ENCODE measurements at regions of chr2 and their contacts with region 1.

Region 1: GRCh38 chr2:105037572-105038382 is at the start of gene MRPS9:
- DNase-seq: peak; percentile 99
- H3K4me3 Mint-ChIP-seq: peak within 1 kb of the TSS; percentile 94
- H3K27ac Mint-ChIP-seq: peak within 1 kb of the TSS; percentile 82
- H3K4me1 Mint-ChIP-seq: peaks cover 33% of the 10 kb centered on the region
- H3K27me3 Mint-ChIP-seq: no peaks in the 10 kb centered on the region
- total RNA-seq, gene MRPS9: 38.2 to 39.3 TPM

Region 2: GRCh38 chr2:105055613-105056012 is 17.8 kb after region 1 on chr2:
- CTCF ChIA-PET with region 1: no interaction called
- POLR2A ChIA-PET with region 1: no interaction called
- intact Hi-C with region 1: loop called (anchors 2 kb)
- DNase-seq: no peak
- H3K4me3 Mint-ChIP-seq: no peak overlapping the region
- H3K27ac Mint-ChIP-seq: no peak overlapping the region
- H3K4me1 Mint-ChIP-seq: peaks cover 13% of the 10 kb centered on the region
- H3K27me3 Mint-ChIP-seq: no peaks in the 10 kb centered on the region

Region 3: GRCh38 chr2:105072039-105072438 is 34.3 kb after region 1 on chr2:
- CTCF ChIA-PET with region 1: no interaction called
- POLR2A ChIA-PET with region 1: no interaction called
- intact Hi-C with region 1: loop called (anchors 5 kb)
- DNase-seq: peak; percentile 52
- H3K4me3 Mint-ChIP-seq: no peak overlapping the region
- H3K27ac Mint-ChIP-seq: no peak overlapping the region
- H3K4me1 Mint-ChIP-seq: peaks cover 20% of the 10 kb centered on the region
- H3K27me3 Mint-ChIP-seq: no peaks in the 10 kb centered on the region

Region 4: DNA sequence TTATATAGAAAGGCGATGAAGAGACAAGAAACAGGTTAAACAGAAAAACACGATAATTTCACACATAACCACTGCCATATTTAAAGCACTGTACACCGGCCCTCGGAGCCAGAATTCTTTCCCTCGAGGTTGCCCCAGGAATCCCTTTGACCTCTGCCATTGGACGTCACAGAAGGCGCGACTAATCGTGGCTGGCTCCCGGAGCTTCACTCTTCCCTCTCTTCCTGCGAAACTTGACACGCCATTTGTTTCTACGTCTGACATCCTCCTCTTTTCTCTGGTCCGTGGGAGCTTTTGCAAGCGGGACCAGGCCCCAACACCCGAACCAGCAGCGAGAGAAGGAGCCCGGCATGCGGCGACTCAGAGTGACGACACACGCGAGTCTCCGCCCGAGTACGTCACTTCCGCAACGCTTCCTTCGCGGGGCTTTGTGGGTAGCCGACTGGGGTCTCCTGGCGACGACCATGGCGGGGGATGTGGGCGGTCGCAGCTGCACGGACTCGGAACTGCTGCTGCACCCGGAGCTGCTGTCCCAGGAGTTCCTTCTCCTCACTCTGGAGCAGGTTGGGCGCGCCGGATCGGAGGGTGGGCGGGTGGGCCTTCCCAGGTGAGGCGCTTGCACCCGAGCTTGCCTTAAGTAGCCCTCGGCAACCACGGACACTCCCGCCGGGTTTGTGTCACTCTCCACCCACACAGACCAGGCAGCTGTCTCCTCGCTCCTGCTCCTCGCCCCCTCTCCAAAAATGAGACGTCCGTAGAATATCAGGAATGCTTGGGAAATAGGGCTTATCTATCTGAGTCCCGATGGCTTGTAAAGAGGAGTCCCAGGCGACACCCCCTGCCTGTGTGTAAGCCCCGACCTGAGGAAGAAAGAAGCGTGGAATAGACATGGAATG is 299.6 kb after region 1 on chr2 and contains the start of gene C2orf49:
- CTCF ChIA-PET with region 1: no interaction called
- POLR2A ChIA-PET with region 1: no interaction called
- intact Hi-C with region 1: loop called (anchors 10 kb)
- DNase-seq: peak; percentile 93
- H3K4me3 Mint-ChIP-seq: peak within 1 kb of the TSS; percentile 95
- H3K27ac Mint-ChIP-seq: peak within 1 kb of the TSS; percentile 99
- H3K4me1 Mint-ChIP-seq: peaks cover 33% of the 10 kb centered on the region
- H3K27me3 Mint-ChIP-seq: no peaks in the 10 kb centered on the region
- total RNA-seq, gene C2orf49: 16.9 to 20.2 TPM

Region 5: DNA sequence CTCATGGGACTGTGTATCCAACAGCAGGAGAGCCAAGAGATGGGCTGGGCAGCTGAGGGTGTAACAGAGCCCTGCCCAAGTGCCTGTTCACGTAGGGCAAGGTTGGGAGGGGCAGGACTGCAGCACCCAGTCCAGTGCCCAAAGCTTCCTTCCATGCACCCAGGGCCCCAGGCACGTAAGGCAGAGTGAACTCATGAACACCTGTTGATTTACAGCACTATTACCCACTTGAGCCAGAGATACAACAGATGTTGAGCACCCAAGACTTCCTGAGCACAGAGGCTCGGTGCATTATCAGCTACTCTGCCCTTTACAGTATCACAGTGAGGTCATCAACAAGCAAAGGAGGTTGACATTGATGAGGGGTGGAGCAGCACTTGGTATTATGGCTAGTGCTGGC is 411.3 kb after region 1 on chr2:
- CTCF ChIA-PET with region 1: no interaction called
- POLR2A ChIA-PET with region 1: no interaction called
- intact Hi-C with region 1: no loop called
- DNase-seq: no peak
- H3K4me3 Mint-ChIP-seq: no peak overlapping the region
- H3K27ac Mint-ChIP-seq: no peak overlapping the region
- H3K4me1 Mint-ChIP-seq: no peaks in the 10 kb centered on the region
- H3K27me3 Mint-ChIP-seq: peaks cover 21% of the 10 kb centered on the region

Measured in activated CD4-positive, alpha-beta memory T cell treated with anti-CD3 and anti-CD28 coated beads for 36 hours (primary cell).